CD8-positive, alpha-beta T cell (primary cell): ENCODE measurements at regions of chr16 and their contacts with region 1.

Region 1: DNA sequence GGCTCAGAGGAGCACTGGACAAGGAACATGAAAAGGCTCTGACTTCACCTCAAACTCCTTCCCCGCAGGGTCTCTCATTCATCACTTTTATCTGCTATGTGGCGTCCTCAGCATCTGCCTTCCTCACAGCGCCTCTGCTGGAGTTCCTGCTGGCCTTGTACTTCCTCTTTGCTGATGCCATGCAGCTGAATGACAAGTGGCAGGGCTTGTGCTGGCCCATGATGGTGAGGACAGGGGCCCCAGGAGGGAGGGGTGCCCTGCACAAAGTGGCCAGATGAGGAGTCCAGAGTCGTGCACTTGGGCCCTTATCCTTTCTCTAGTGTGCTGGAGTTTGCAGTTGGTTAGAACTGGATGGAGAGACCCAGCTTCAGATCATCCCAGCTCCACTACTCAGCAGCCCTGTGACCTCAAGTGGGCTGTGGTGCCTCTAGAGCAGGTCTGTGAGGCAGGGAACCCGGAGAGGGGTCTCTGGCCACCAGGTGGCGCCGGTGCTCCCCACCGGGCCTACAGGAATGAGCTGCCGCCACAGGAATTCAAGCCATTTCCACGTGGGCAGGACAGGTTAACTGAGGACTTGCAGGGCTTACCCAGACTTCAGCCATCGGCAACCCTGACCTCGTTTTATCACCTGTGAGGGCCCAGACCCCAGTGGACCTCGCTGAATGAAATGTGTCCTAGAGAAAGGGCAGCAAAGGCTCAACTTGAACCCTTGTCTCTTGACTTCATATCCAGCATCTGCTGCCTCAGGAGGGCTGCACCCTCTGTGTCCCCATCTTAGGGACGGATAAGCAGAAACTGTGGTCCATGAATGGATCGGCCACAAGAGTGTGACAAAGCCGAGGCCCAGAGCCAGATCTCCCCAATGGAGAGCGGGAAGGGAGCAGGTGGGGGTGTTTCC is 4.0 kb downstream of the CMTM3 start:
- DNase-seq: peak; percentile 66 to 88 (median 82)
- ATAC-seq: peak; percentile 29
- H3K4me3 ChIP-seq: no peak overlapping the region
- H3K4me3 Mint-ChIP-seq: no peak overlapping the region
- H3K27ac ChIP-seq: peak overlapping the region in 1 of 2 experiments; percentile 21
- H3K27ac Mint-ChIP-seq: peak overlapping the region; percentile 60
- H3K4me1 ChIP-seq: peaks cover 24% of the 10 kb centered on the region
- H3K4me1 Mint-ChIP-seq: peaks cover 35% of the 10 kb centered on the region
- H3K27me3 ChIP-seq: no peaks in the 10 kb centered on the region
- H3K27me3 Mint-ChIP-seq: no peaks in the 10 kb centered on the region
- CTCF ChIP-seq: peak; percentile 85

Region 2: GRCh38 chr16:66406534-66407221 is 201.8 kb before region 1 on chr16:
- CTCF ChIA-PET with region 1: interaction called, 17 read pairs
- POLR2A ChIA-PET with region 1: interaction called, 8 read pairs
- intact Hi-C with region 1: loop called (anchors 1 kb)
- DNase-seq: peak; percentile 75 to 97 (median 87)
- ATAC-seq: peak; percentile 75
- H3K4me3 ChIP-seq: peak overlapping the region; percentile 60 to 66
- H3K4me3 Mint-ChIP-seq: peak overlapping the region; percentile 83
- H3K27ac ChIP-seq: no peak overlapping the region
- H3K27ac Mint-ChIP-seq: no peak overlapping the region
- H3K4me1 ChIP-seq: peaks cover 21% of the 10 kb centered on the region
- H3K4me1 Mint-ChIP-seq: peaks cover 26% of the 10 kb centered on the region
- H3K27me3 ChIP-seq: no peaks in the 10 kb centered on the region
- H3K27me3 Mint-ChIP-seq: peaks cover 5% of the 10 kb centered on the region
- CTCF ChIP-seq: peak; percentile 90

Region 3: GRCh38 chr16:66552286-66553177 is 56.0 kb before region 1 on chr16 and contains the start of gene CKLF:
- CTCF ChIA-PET with region 1: interaction called, 12 read pairs
- POLR2A ChIA-PET with region 1: interaction called, 14 read pairs
- intact Hi-C with region 1: loop called (anchors 1 to 2 kb)
- DNase-seq: peak; percentile 83 to 96 (median 90)
- ATAC-seq: peak; percentile 66
- H3K4me3 ChIP-seq: peak within 1 kb of the TSS; percentile 88 to 95
- H3K4me3 Mint-ChIP-seq: peak within 1 kb of the TSS; percentile 94
- H3K27ac ChIP-seq: peak within 1 kb of the TSS; percentile 76 to 81
- H3K27ac Mint-ChIP-seq: peak within 1 kb of the TSS; percentile 91
- H3K4me1 ChIP-seq: peaks cover 66% of the 10 kb centered on the region
- H3K4me1 Mint-ChIP-seq: peaks cover 79% of the 10 kb centered on the region
- H3K27me3 ChIP-seq: no peaks in the 10 kb centered on the region
- H3K27me3 Mint-ChIP-seq: no peaks in the 10 kb centered on the region
- CTCF ChIP-seq: no peak
- total RNA-seq, gene CKLF: 7.9 to 11.1 TPM

Region 4: GRCh38 chr16:66588981-66589713 is 19.3 kb before region 1 on chr16:
- CTCF ChIA-PET with region 1: interaction called, 17 read pairs
- POLR2A ChIA-PET with region 1: interaction called, 15 read pairs
- intact Hi-C with region 1: loop called (anchors 1 kb)
- DNase-seq: peak; percentile 45 to 85 (median 70)
- ATAC-seq: peak; percentile 94
- H3K4me3 ChIP-seq: no peak overlapping the region
- H3K4me3 Mint-ChIP-seq: peak overlapping the region; percentile 83
- H3K27ac ChIP-seq: no peak overlapping the region
- H3K27ac Mint-ChIP-seq: peak overlapping the region; percentile 49
- H3K4me1 ChIP-seq: peaks cover 25% of the 10 kb centered on the region
- H3K4me1 Mint-ChIP-seq: peaks cover 24% of the 10 kb centered on the region
- H3K27me3 ChIP-seq: no peaks in the 10 kb centered on the region
- H3K27me3 Mint-ChIP-seq: no peaks in the 10 kb centered on the region
- CTCF ChIP-seq: peak; percentile 71

Region 5: DNA sequence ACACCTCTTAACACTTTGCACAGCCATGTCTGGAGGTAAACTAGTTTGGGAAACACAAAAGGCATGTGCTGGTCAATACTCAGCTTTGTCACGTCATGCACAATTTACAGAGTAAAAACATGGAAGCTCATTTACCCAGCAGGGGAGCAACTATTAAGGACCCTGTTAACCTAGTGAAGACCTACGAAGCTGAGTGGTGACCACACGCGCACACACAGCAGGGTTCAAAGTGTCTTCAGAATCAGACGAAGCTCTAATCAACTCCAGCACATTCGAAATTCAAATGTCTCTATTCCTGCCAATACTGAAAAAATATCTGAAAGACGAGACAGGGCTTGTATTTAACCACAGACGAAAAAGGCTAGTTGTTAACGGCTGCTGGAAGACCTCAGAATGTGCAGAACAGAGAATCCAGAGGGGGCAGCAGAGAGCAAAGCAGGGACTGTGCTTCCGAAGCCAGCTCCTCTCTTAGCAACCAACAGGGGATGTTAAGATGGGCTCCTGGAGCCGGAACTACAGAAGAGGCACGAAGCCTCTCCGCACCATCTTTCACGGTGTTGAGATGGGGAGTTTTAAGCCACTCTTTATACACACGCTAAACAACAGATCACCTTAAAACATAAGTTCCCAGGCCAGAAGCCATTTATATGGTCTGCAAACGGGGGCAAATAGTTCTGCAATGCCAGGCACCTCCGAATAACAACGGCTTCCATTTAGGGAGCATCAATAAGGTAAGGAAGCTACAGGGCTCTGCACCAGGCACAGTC is 42.4 kb after region 1 on chr16:
- CTCF ChIA-PET with region 1: interaction called, 15 read pairs
- POLR2A ChIA-PET with region 1: interaction called, 6 read pairs
- intact Hi-C with region 1: no loop called
- DNase-seq: peak; percentile 65 to 90 (median 82)
- ATAC-seq: peak; percentile 99
- H3K4me3 ChIP-seq: peak overlapping the region; percentile 35
- H3K4me3 Mint-ChIP-seq: peak overlapping the region; percentile 72
- H3K27ac ChIP-seq: no peak overlapping the region
- H3K27ac Mint-ChIP-seq: peak overlapping the region; percentile 55
- H3K4me1 ChIP-seq: peaks cover 9% of the 10 kb centered on the region
- H3K4me1 Mint-ChIP-seq: peaks cover 8% of the 10 kb centered on the region
- H3K27me3 ChIP-seq: no peaks in the 10 kb centered on the region
- H3K27me3 Mint-ChIP-seq: peaks cover 5% of the 10 kb centered on the region
- CTCF ChIP-seq: peak; percentile 94

Region 6: GRCh38 chr16:66872943-66873684 is 264.6 kb after region 1 on chr16:
- CTCF ChIA-PET with region 1: interaction called, 3 read pairs
- POLR2A ChIA-PET with region 1: no interaction called
- intact Hi-C with region 1: loop called (anchors 5 kb)
- DNase-seq: peak; percentile 68 to 96 (median 89)
- ATAC-seq: peak; percentile 84
- H3K4me3 ChIP-seq: peak overlapping the region; percentile 53 to 57
- H3K4me3 Mint-ChIP-seq: peak overlapping the region; percentile 74
- H3K27ac ChIP-seq: peak overlapping the region; percentile 11 to 68
- H3K27ac Mint-ChIP-seq: peak overlapping the region; percentile 34
- H3K4me1 ChIP-seq: peaks cover 9% of the 10 kb centered on the region
- H3K4me1 Mint-ChIP-seq: peaks cover 25% of the 10 kb centered on the region
- H3K27me3 ChIP-seq: no peaks in the 10 kb centered on the region
- H3K27me3 Mint-ChIP-seq: no peaks in the 10 kb centered on the region
- CTCF ChIP-seq: peak; percentile 92